ENCODE measurements at regions of chr11 and their contacts with region 1.

Region 1: DNA sequence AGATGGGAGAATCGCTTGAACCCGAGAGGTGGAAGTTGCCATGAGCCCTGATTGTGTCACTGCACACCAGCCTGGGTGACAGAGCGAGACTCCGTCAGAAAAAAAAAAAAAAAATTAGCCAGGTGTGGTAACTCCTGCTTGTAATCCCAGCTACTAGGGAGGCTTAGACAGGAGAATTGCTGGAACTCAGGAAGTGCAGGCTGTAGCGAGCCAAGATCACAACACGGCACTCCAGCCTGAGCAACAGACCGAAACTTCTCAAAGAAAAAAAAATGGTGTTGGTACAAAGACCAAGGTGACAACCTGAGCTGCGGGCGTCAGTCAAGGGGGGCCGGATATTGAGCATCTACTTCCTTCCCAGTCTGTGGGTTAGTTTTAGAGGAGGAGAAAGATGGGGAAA is 48.4 kb upstream of the HSPA8 start:
- DNase-seq: no peak
- H3K4me3 ChIP-seq: no peak overlapping the region
- CTCF ChIP-seq: no peak

Region 2: GRCh38 chr11:123046473-123047259 is 63.7 kb before region 1 on chr11:
- CTCF ChIA-PET with region 1: no interaction called
- POLR2A ChIA-PET with region 1: no interaction called
- DNase-seq: no peak
- H3K4me3 ChIP-seq: no peak overlapping the region
- CTCF ChIP-seq: no peak

Region 3: GRCh38 chr11:123122341-123122740 is 12.0 kb after region 1 on chr11:
- CTCF ChIA-PET with region 1: interaction called, 38 read pairs
- POLR2A ChIA-PET with region 1: interaction called, 3 read pairs
- DNase-seq: no peak
- H3K4me3 ChIP-seq: no peak overlapping the region
- CTCF ChIP-seq: no peak

Region 4: GRCh38 chr11:123137431-123138224 is 27.3 kb after region 1 on chr11:
- CTCF ChIA-PET with region 1: interaction called, 16 read pairs
- POLR2A ChIA-PET with region 1: no interaction called
- DNase-seq: no peak
- H3K4me3 ChIP-seq: peak overlapping the region; percentile 25
- CTCF ChIP-seq: no peak

Region 5: GRCh38 chr11:123166071-123166559 is 55.8 kb after region 1 on chr11:
- CTCF ChIA-PET with region 1: interaction called, 16 read pairs
- POLR2A ChIA-PET with region 1: no interaction called
- DNase-seq: peak; percentile 75
- H3K4me3 ChIP-seq: no peak overlapping the region
- CTCF ChIP-seq: peak; percentile 75

Region 6: DNA sequence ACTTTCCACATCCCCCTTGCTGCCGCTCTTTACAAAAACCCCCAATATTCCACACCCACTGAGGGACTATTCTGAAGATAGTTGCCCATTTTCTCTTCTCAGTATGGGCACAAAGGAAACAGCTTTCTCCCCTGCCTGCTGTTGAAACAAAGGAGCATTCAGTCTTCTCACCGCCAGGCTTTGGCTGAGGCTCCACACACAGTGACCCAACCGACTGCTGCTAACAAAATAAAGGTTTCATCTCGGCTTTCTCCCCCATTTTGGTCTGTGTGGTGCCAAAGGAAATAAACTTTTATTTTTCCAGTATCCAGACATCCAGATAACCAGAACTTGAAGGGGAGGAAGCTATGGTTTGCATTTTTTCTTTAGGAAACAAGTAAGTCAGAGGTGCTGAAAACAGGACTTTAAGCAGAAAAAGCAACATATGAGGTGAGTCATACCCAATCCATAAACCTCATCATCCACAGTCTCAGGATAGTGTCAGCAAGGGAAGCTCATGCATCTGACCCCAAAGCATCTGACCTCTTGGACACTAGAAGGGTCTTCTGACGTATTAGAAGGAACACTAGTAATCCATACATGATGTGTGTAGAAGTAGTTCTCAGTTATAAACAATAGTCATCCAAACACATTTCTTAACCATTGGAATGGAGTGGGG is 78.3 kb after region 1 on chr11:
- CTCF ChIA-PET with region 1: interaction called, 14 read pairs
- POLR2A ChIA-PET with region 1: interaction called, 3 read pairs
- DNase-seq: no peak
- H3K4me3 ChIP-seq: peak overlapping the region; percentile 37
- CTCF ChIP-seq: peak; percentile 11